Mammary epithelial cell (primary cell): ENCODE measurements at regions of chr21 and their contacts with region 1.

Region 1: DNA sequence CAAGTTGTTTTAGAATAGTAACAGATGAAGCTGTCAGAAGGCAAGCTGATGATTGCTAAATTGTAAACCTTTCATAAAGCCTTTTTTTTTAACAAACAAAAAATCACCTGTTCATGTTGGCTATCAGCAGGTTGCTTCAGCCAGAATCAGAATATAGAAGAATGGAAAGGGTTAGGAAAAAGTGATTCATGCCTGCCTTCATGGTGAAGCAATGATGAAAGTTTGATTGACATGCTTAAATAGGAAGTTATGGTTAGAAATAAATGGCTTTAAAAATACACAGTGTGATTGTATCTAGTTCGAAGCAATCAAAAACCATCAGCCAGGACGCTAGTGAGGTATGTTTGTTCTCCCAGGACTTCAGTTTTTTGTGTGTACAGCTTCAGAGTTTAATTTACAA is 37.9 kb downstream of the GABPA start:
- DNase-seq: no peak
- H3K4me3 ChIP-seq: no peak overlapping the region
- H3K27ac ChIP-seq: no peak overlapping the region
- H3K4me1 ChIP-seq: no peaks in the 10 kb centered on the region
- H3K27me3 ChIP-seq: no peaks in the 10 kb centered on the region
- CTCF ChIP-seq: no peak

Region 2: GRCh38 chr21:25561668-25562641 is 210.7 kb before region 1 on chr21:
- CTCF ChIA-PET with region 1: no interaction called
- dilution Hi-C with region 1: no loop called
- in situ Hi-C with region 1: no loop called
- intact Hi-C with region 1: no loop called
- DNase-seq: no peak
- H3K4me3 ChIP-seq: peak overlapping the region; percentile 32 to 54 (median 49)
- H3K27ac ChIP-seq: no peak overlapping the region
- H3K4me1 ChIP-seq: peaks cover 7% of the 10 kb centered on the region
- H3K27me3 ChIP-seq: no peaks in the 10 kb centered on the region
- CTCF ChIP-seq: peak in 1 of 2 donors; percentile 39

Region 3: GRCh38 chr21:25750085-25750484 is 22.6 kb before region 1 on chr21:
- CTCF ChIA-PET with region 1: interaction called, 19 read pairs
- dilution Hi-C with region 1: no loop called
- in situ Hi-C with region 1: no loop called
- intact Hi-C with region 1: no loop called
- DNase-seq: no peak
- H3K4me3 ChIP-seq: no peak overlapping the region
- H3K27ac ChIP-seq: no peak overlapping the region
- H3K4me1 ChIP-seq: no peaks in the 10 kb centered on the region
- H3K27me3 ChIP-seq: no peaks in the 10 kb centered on the region
- CTCF ChIP-seq: no peak

Region 4: GRCh38 chr21:25831300-25831960 is 58.7 kb after region 1 on chr21:
- CTCF ChIA-PET with region 1: no interaction called
- dilution Hi-C with region 1: no loop called
- in situ Hi-C with region 1: no loop called
- intact Hi-C with region 1: no loop called
- DNase-seq: no peak
- H3K4me3 ChIP-seq: no peak overlapping the region
- H3K27ac ChIP-seq: no peak overlapping the region
- H3K4me1 ChIP-seq: peaks cover 26% of the 10 kb centered on the region
- H3K27me3 ChIP-seq: no peaks in the 10 kb centered on the region
- CTCF ChIP-seq: no peak